CD8-positive, alpha-beta T cell (primary cell): ENCODE measurements at regions of chr19 and their contacts with region 1.

Region 1: GRCh38 chr19:56360841-56361240 is 32.5 kb downstream of the ZNF582 start:
- DNase-seq: no peak
- ATAC-seq: no peak
- H3K4me3 ChIP-seq: no peak overlapping the region
- H3K4me3 Mint-ChIP-seq: no peak overlapping the region
- H3K27ac ChIP-seq: no peak overlapping the region
- H3K27ac Mint-ChIP-seq: no peak overlapping the region
- H3K4me1 ChIP-seq: no peaks in the 10 kb centered on the region
- H3K4me1 Mint-ChIP-seq: no peaks in the 10 kb centered on the region
- H3K27me3 ChIP-seq: no peaks in the 10 kb centered on the region
- H3K27me3 Mint-ChIP-seq: no peaks in the 10 kb centered on the region
- CTCF ChIP-seq: no peak

Region 2: DNA sequence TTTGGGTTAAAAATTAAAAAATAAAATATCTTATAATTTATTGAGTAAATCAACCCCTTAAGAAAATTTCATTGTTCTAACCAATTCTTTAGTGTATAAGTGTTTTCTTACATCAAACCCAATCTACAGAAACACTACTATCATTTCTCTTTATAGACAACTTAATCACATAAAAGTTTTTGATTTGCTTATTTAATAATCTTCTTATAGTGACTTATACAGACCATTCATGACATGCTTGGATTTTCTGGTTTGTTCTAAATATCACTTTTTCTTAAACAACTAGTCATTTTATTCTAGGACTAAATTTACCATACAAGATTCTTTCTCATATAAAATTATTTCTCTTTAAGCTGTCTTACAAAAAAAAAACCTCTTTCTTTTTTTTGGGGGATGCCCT is 18.9 kb before region 1 on chr19:
- CTCF ChIA-PET with region 1: no interaction called
- POLR2A ChIA-PET with region 1: no interaction called
- intact Hi-C with region 1: no loop called
- DNase-seq: no peak
- ATAC-seq: no peak
- H3K4me3 ChIP-seq: no peak overlapping the region
- H3K4me3 Mint-ChIP-seq: no peak overlapping the region
- H3K27ac ChIP-seq: no peak overlapping the region
- H3K27ac Mint-ChIP-seq: no peak overlapping the region
- H3K4me1 ChIP-seq: no peaks in the 10 kb centered on the region
- H3K4me1 Mint-ChIP-seq: no peaks in the 10 kb centered on the region
- H3K27me3 ChIP-seq: no peaks in the 10 kb centered on the region
- H3K27me3 Mint-ChIP-seq: peaks cover 14% of the 10 kb centered on the region
- CTCF ChIP-seq: no peak

Region 3: GRCh38 chr19:56808717-56809392 is 448.0 kb after region 1 on chr19:
- CTCF ChIA-PET with region 1: no interaction called
- POLR2A ChIA-PET with region 1: no interaction called
- intact Hi-C with region 1: loop called in 1 of 2 experiments (anchors 5 kb)
- DNase-seq: no peak
- ATAC-seq: no peak
- H3K4me3 ChIP-seq: no peak overlapping the region
- H3K4me3 Mint-ChIP-seq: no peak overlapping the region
- H3K27ac ChIP-seq: no peak overlapping the region
- H3K27ac Mint-ChIP-seq: no peak overlapping the region
- H3K4me1 ChIP-seq: no peaks in the 10 kb centered on the region
- H3K4me1 Mint-ChIP-seq: no peaks in the 10 kb centered on the region
- H3K27me3 ChIP-seq: no peaks in the 10 kb centered on the region
- H3K27me3 Mint-ChIP-seq: no peaks in the 10 kb centered on the region
- CTCF ChIP-seq: no peak

Region 4: GRCh38 chr19:57161985-57162539 is 801.2 kb after region 1 on chr19:
- CTCF ChIA-PET with region 1: no interaction called
- POLR2A ChIA-PET with region 1: no interaction called
- intact Hi-C with region 1: no loop called
- DNase-seq: no peak
- ATAC-seq: no peak
- H3K4me3 ChIP-seq: no peak overlapping the region
- H3K4me3 Mint-ChIP-seq: no peak overlapping the region
- H3K27ac ChIP-seq: no peak overlapping the region
- H3K27ac Mint-ChIP-seq: no peak overlapping the region
- H3K4me1 ChIP-seq: no peaks in the 10 kb centered on the region
- H3K4me1 Mint-ChIP-seq: no peaks in the 10 kb centered on the region
- H3K27me3 ChIP-seq: no peaks in the 10 kb centered on the region
- H3K27me3 Mint-ChIP-seq: peaks cover 5% of the 10 kb centered on the region
- CTCF ChIP-seq: no peak